Activated B cell treated with CpG ODN at 0.5 μM for 24 hours (primary cell): ENCODE measurements at regions of chr5 and their contacts with region 1.

Region 1: GRCh38 chr5:96807075-96807654 is 580 bp downstream of the ERAP1 start:
- DNase-seq: no peak
- ATAC-seq: peak; percentile 12
- H3K4me3 Mint-ChIP-seq: peak overlapping the region; percentile 97
- H3K27ac Mint-ChIP-seq: peak overlapping the region; percentile 99
- H3K4me1 Mint-ChIP-seq: peaks cover 48% of the 10 kb centered on the region
- H3K27me3 Mint-ChIP-seq: no peaks in the 10 kb centered on the region
- CTCF ChIP-seq: no peak

Region 2: DNA sequence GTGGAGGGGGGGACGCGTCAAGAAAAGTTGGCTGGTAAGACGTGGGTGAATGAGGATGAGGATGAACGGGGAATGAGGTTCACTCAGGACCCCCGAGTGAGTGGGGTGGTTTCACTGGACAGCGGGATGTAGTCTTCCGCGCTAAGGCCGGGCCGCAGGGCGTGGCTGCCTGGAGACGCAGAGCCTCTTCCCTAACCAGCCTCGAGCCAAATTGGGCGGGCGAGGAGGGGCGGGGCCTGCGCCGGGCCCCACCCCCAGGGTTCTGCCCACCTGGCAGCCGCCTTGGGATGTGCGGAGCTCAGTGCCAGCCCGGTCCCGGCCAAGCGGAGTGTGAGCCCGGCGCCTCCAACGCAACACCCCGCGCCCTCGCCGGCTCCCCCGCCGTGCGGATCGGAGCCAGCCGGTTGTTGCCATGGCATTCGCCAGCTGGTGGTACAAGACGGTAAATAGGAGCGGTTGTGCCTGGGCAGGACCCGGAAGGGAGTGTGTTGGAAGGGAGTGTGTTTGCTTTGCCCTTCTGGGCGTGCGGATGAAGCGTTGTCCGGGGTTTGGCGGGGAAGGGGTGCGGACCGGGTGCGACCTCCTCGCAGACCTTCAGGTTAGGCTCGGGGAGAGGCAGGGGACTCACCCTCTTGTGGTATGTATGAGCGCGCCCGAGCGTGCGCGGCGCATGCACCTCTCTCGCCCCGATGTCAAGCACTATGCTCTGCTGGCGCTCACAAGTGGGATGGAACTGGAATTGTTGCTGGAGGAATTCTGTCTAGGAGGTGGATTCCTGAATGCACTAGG is 144.2 kb before region 1 on chr5:
- CTCF ChIA-PET with region 1: no interaction called
- POLR2A ChIA-PET with region 1: interaction called, 32 read pairs
- intact Hi-C with region 1: loop called (anchors 2 kb)
- DNase-seq: peak; percentile 89
- ATAC-seq: peak; percentile 72
- H3K4me3 Mint-ChIP-seq: peak overlapping the region; percentile 98
- H3K27ac Mint-ChIP-seq: peak overlapping the region; percentile 98
- H3K4me1 Mint-ChIP-seq: peaks cover 51% of the 10 kb centered on the region
- H3K27me3 Mint-ChIP-seq: no peaks in the 10 kb centered on the region
- CTCF ChIP-seq: no peak

Region 3: GRCh38 chr5:96763026-96763425 is 44.1 kb before region 1 on chr5:
- CTCF ChIA-PET with region 1: no interaction called
- POLR2A ChIA-PET with region 1: no interaction called
- intact Hi-C with region 1: loop called (anchors 5 kb)
- DNase-seq: no peak
- ATAC-seq: no peak
- H3K4me3 Mint-ChIP-seq: no peak overlapping the region
- H3K27ac Mint-ChIP-seq: no peak overlapping the region
- H3K4me1 Mint-ChIP-seq: no peaks in the 10 kb centered on the region
- H3K27me3 Mint-ChIP-seq: no peaks in the 10 kb centered on the region
- CTCF ChIP-seq: no peak

Region 4: GRCh38 chr5:96896806-96897205 is 89.6 kb after region 1 on chr5:
- CTCF ChIA-PET with region 1: interaction called, 4 read pairs
- POLR2A ChIA-PET with region 1: interaction called, 25 read pairs
- intact Hi-C with region 1: loop called (anchors 1 kb)
- DNase-seq: peak; percentile 39
- ATAC-seq: peak; percentile 94
- H3K4me3 Mint-ChIP-seq: peak overlapping the region; percentile 80
- H3K27ac Mint-ChIP-seq: peak overlapping the region; percentile 93
- H3K4me1 Mint-ChIP-seq: peaks cover 54% of the 10 kb centered on the region
- H3K27me3 Mint-ChIP-seq: no peaks in the 10 kb centered on the region
- CTCF ChIP-seq: no peak

Region 5: GRCh38 chr5:97009212-97009898 is 202.2 kb after region 1 on chr5:
- CTCF ChIA-PET with region 1: no interaction called
- POLR2A ChIA-PET with region 1: no interaction called
- intact Hi-C with region 1: loop called (anchors 2 kb)
- DNase-seq: no peak
- ATAC-seq: peak; percentile 83
- H3K4me3 Mint-ChIP-seq: peak overlapping the region; percentile 66
- H3K27ac Mint-ChIP-seq: peak overlapping the region; percentile 91
- H3K4me1 Mint-ChIP-seq: peaks cover 24% of the 10 kb centered on the region
- H3K27me3 Mint-ChIP-seq: no peaks in the 10 kb centered on the region
- CTCF ChIP-seq: no peak

Region 6: DNA sequence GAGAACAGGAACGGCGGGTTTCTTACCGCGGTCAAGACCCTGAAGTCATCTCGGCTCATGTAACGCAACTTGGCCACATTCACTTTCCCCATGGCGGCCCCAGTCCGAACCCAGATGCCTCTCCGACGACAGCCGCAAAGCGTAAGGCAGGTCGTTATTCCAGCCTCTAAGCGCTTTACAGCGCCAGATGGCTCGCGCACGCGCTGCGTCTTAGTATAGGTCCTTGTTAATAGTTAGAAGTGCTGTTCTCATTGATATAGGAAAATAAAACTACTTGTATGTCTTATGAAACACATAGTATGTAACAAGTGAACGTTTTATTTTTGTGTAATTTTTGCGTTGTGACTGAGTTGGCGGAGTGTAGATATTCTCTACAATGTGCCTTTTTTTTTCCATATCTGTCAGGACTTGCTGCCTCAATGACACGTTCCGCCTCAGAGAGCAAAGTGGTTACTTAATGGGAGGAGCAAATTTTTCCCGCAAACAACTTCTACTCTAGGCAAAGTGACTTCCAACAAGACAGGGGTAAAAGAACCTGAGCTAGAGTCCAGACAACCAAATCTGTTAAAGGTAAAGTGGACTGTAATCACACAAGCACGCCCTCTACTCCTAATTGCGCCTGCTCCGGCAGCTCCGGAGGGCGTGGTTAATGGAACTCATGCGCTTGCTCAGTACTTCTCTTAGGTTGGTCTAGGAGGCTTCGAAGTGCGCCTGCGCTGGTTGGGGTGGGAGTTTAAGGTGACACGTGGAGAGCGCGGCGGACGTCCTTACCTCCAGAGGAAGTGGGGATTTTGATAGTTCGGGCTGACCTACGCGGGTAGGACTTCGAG is 376.1 kb after region 1 on chr5 and contains the start of gene RIOK2:
- CTCF ChIA-PET with region 1: no interaction called
- POLR2A ChIA-PET with region 1: interaction called, 6 read pairs
- intact Hi-C with region 1: loop called (anchors 1 kb)
- DNase-seq: peak; percentile 78
- ATAC-seq: peak; percentile 89
- H3K4me3 Mint-ChIP-seq: peak within 1 kb of the TSS; percentile 96
- H3K27ac Mint-ChIP-seq: peak within 1 kb of the TSS; percentile 99
- H3K4me1 Mint-ChIP-seq: peaks cover 34% of the 10 kb centered on the region
- H3K27me3 Mint-ChIP-seq: no peaks in the 10 kb centered on the region
- CTCF ChIP-seq: no peak
- total RNA-seq, gene RIOK2: 38.3 and 41.4 TPM in 2 replicates

Region 7: DNA sequence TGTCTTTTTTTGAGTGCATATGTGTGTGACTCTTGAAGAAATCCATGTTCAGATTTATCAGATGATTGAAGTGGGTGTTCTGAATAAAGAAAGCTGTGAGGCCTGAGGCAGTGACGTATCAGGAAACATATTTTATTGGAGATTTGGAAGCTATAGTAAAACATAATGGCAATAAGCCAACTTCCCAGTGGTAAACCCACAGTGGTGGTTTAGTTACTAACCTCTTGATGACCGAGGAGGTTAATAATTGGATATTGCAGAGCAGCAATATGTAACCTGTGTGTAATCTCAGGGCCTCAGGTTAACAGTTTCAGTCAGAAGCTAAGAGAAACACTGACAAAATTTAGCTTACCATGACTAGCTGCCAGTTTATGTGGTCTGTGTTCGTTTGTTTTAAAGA is 1973.2 kb after region 1 on chr5:
- CTCF ChIA-PET with region 1: no interaction called
- POLR2A ChIA-PET with region 1: interaction called, 11 read pairs
- intact Hi-C with region 1: no loop called
- DNase-seq: no peak
- ATAC-seq: no peak
- H3K4me3 Mint-ChIP-seq: no peak overlapping the region
- H3K27ac Mint-ChIP-seq: no peak overlapping the region
- H3K4me1 Mint-ChIP-seq: peaks cover 22% of the 10 kb centered on the region
- H3K27me3 Mint-ChIP-seq: no peaks in the 10 kb centered on the region
- CTCF ChIP-seq: no peak